Panc1 (cell line): ENCODE measurements at regions of chr5 and their contacts with region 1.

Region 1: DNA sequence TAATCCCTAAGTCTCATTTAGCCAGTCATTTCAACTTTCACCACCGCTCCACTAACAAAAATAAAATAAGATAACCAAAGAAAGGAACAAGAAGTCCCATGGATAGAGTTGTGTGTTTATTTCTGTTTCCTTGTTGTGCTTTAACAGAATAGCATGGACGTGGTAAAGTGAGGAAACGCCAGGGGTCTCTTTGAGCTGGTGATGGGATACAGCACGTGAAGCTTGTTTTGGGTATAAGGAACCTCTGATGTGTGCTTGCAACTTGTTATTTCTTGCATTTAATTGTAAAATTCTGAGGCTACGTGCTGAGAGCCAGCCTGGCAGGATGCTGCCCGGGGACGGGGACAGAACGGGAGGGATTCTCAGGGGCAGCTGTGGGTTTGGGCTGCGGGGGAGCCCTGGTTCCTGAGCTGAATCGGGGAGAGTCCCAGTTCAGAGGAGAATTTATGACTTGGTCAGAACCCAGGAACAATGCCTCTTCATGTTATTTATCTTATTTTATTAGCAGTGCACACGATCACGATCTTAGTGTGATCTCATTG is 63.4 kb downstream of the ANKRD33B start:
- DNase-seq: no peak
- ATAC-seq: peak; percentile 54
- H3K4me3 ChIP-seq: peak overlapping the region; percentile 29 to 64
- H3K27ac ChIP-seq: peak overlapping the region; percentile 65
- H3K4me1 ChIP-seq: peaks cover 16% of the 10 kb centered on the region
- H3K27me3 ChIP-seq: no peaks in the 10 kb centered on the region
- CTCF ChIP-seq: no peak

Region 2: DNA sequence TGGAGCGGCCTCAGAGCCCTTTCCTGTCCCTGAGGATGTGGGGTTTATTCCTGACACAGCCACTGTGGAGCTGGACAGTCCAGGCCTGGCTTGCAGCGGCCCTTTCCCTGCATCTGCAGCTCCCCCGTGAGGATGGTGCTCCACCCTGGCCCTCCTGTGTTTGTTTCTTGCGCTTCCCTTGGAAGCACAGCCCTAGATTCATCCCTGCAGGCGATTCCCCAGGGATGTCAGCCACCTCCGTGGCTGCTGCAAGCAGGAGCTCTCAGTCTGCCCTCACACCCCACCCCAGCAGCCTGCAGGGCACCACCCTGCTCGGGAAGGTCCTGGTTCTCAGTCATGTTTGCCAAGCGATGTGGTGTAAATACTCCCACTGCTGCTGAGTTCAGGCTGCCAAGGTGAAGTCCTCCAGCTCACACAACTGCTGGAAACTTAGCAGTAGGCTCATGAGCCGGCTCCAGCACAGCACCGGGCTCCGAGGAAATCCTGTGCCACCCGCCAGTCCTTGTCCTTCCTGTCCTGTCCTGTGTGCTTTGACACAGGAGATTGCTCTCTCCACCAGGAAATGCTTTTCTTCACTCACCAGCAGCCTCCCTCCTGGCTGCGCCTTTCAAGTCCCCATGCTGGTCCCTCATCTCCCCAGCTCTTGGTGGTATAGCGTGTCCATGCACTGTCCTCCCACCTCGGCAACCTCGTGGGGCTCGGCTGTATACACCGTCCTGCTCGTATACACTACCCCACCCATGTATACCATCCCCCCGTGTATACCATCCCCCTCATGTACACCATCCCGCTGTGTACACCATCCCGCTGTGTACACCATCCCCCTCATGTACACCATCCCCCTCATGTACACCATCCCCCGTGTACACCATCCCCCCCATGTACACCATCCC is 169.3 kb before region 1 on chr5:
- CTCF ChIA-PET with region 1: interaction called, 53 read pairs
- POLR2A ChIA-PET with region 1: no interaction called
- in situ Hi-C with region 1: no loop called
- intact Hi-C with region 1: no loop called
- DNase-seq: no peak
- ATAC-seq: peak; percentile 70
- H3K4me3 ChIP-seq: peak overlapping the region in 1 of 2 experiments; percentile 14; a peak in 1 of 4 replicates
- H3K27ac ChIP-seq: peak overlapping the region; percentile 65
- H3K4me1 ChIP-seq: peaks cover 69% of the 10 kb centered on the region
- H3K27me3 ChIP-seq: no peaks in the 10 kb centered on the region
- CTCF ChIP-seq: no peak; the same call in 1 of the 2 replicates

Region 3: GRCh38 chr5:10563945-10564837 is 63.0 kb before region 1 on chr5 and contains the start of gene ANKRD33B:
- CTCF ChIA-PET with region 1: no interaction called
- POLR2A ChIA-PET with region 1: no interaction called
- in situ Hi-C with region 1: no loop called
- intact Hi-C with region 1: loop called (anchors 5 kb)
- DNase-seq: no peak
- ATAC-seq: peak; percentile 81
- H3K4me3 ChIP-seq: peak within 1 kb of the TSS; percentile 59 to 70
- H3K27ac ChIP-seq: peak within 1 kb of the TSS; percentile 78
- H3K4me1 ChIP-seq: peaks cover 33% of the 10 kb centered on the region
- H3K27me3 ChIP-seq: no peaks in the 10 kb centered on the region
- CTCF ChIP-seq: no peak
- total RNA-seq, gene ANKRD33B: 19.1 TPM